ENCODE measurements at regions of chr11 and their contacts with region 1.

Region 1: DNA sequence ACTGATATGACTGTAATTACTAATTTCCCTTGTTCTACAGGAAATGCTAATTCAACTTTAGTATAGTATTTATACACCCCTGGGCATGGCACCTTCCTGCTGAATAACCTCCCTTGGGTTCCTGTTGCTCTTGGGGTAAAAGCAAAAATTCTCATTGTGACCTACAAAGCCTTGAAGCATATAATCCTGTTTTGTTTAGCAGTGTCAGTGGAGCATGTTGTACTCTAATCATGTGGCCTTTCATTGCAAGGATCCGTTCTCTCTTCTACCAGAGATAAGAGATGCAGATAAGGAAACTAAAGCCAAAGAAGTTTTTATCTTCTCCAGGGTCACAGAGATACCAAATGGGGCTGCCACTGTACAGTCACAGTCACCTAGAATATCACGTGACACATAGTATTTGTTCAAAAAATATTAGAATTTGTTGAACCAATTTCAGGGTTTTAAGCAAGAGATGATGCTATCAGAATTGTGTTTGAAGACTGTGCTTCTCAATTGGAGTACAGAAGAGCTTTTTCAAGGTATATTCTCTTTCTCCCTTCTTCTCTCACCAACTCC is 25.1 kb downstream of the CSRP3 start:
- DNase-seq: no peak
- H3K4me3 ChIP-seq: no peak overlapping the region
- H3K27ac ChIP-seq: no peak overlapping the region
- H3K4me1 ChIP-seq: no peaks in the 10 kb centered on the region
- H3K27me3 ChIP-seq: no peaks in the 10 kb centered on the region
- CTCF ChIP-seq: no peak
- POLR2A ChIP-seq: no peak

Region 2: GRCh38 chr11:17605651-17606122 is 1571.0 kb before region 1 on chr11:
- intact Hi-C with region 1: loop called (anchors 5 kb)
- DNase-seq: no peak
- H3K4me3 ChIP-seq: no peak overlapping the region
- H3K27ac ChIP-seq: no peak overlapping the region
- H3K4me1 ChIP-seq: no peaks in the 10 kb centered on the region
- H3K27me3 ChIP-seq: no peaks in the 10 kb centered on the region
- CTCF ChIP-seq: no peak
- POLR2A ChIP-seq: no peak

Region 3: GRCh38 chr11:19200410-19201201 is 23.9 kb after region 1 on chr11:
- intact Hi-C with region 1: no loop called
- DNase-seq: peak; percentile 61 to 63
- H3K4me3 ChIP-seq: no peak overlapping the region
- H3K27ac ChIP-seq: no peak overlapping the region
- H3K4me1 ChIP-seq: peaks cover 0 to 6% of the 10 kb centered on the region in 2 donors
- H3K27me3 ChIP-seq: no peaks in the 10 kb centered on the region
- CTCF ChIP-seq: no peak
- POLR2A ChIP-seq: no peak

Measured in breast epithelium (tissue), 4 donors.